AG04449 (cell line): ENCODE measurements at regions of chr7 and their contacts with region 1.

Region 1: GRCh38 chr7:26365077-26365900 is 73.6 kb downstream of the SNX10 start:
- DNase-seq: peak; percentile 14
- H3K4me3 ChIP-seq: no peak overlapping the region
- CTCF ChIP-seq: peak; percentile 49

Region 2: DNA sequence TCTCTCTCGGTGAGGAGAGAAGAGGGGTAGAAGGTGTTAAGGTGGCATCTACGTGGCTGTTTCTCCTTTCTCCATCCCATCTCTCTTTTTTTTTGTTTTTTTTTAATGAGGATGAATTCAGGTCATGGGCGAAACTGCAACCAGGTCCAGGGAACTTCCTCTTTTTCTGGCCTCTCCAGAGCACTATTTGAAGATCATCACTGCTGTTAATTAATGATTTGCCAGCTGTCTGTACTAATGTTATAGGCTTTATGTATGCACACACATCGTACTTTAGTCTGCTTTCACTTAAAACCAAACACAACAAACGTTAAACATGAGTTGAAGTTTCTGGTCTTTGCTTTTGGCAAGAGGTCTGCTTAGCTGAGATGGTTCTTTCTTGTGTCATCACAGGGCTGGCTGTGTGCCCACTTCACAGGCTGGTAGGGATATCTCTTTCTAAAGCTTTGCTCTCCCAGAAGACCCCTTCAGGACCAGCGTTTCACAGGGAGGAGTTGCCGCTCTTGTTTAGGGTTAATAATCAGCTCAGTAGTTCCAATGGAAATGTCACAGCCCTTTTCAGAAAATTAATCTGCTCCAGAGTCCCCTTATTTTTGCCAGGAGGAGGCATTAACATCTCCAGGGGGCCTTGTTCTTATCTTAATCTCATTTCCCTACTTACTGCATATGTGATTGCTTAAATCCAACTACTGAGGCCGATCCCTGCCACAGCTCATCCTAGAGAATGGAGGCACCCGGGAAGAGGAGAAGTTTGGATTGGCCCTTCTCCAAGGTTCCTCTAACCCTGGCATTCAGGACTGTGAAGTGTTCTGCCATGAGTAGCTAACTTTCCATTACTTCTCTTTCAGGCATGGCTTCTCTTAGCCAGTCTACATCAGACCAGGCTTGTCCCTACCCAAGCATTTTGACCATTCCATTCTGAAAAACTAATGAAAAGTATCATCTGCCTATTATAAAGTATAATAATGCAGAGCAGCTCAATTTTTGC is 487.2 kb before region 1 on chr7:
- CTCF ChIA-PET with region 1: interaction called, 10 read pairs
- POLR2A ChIA-PET with region 1: no interaction called
- DNase-seq: no peak
- H3K4me3 ChIP-seq: no peak overlapping the region
- CTCF ChIP-seq: no peak

Region 3: GRCh38 chr7:25996006-25996408 is 369.3 kb before region 1 on chr7:
- CTCF ChIA-PET with region 1: no interaction called
- POLR2A ChIA-PET with region 1: no interaction called
- DNase-seq: no peak
- H3K4me3 ChIP-seq: no peak overlapping the region
- CTCF ChIP-seq: no peak

Region 4: GRCh38 chr7:26090927-26091519 is 274.3 kb before region 1 on chr7:
- CTCF ChIA-PET with region 1: interaction called, 151 read pairs
- POLR2A ChIA-PET with region 1: no interaction called
- DNase-seq: peak; percentile 26
- H3K4me3 ChIP-seq: no peak overlapping the region
- CTCF ChIP-seq: peak; percentile 57

Region 5: GRCh38 chr7:26388256-26388655 is 23.0 kb after region 1 on chr7:
- CTCF ChIA-PET with region 1: interaction called, 10 read pairs
- POLR2A ChIA-PET with region 1: no interaction called
- DNase-seq: no peak
- H3K4me3 ChIP-seq: no peak overlapping the region
- CTCF ChIP-seq: no peak

Region 6: DNA sequence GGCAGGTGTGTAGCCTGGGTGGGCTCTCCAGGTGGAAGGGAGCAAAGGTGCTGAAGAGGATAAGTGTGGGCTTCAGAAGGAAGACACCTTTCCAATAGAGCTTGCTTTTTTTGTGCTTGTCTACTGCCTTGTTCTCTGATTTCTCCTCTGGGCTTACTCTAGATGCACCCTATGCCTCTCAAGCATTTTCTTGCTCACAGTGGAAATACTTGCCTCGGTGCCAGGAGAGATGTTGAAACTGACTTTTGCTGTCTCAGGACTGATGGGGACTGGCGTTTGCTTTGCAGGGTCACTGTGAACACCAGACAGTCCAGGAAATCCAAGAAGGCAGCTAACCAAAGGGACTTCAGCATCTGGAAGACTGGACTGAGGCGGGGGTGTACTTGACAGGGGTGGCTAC is 114.3 kb after region 1 on chr7:
- CTCF ChIA-PET with region 1: no interaction called
- POLR2A ChIA-PET with region 1: no interaction called
- DNase-seq: no peak
- H3K4me3 ChIP-seq: no peak overlapping the region
- CTCF ChIP-seq: no peak

Region 7: DNA sequence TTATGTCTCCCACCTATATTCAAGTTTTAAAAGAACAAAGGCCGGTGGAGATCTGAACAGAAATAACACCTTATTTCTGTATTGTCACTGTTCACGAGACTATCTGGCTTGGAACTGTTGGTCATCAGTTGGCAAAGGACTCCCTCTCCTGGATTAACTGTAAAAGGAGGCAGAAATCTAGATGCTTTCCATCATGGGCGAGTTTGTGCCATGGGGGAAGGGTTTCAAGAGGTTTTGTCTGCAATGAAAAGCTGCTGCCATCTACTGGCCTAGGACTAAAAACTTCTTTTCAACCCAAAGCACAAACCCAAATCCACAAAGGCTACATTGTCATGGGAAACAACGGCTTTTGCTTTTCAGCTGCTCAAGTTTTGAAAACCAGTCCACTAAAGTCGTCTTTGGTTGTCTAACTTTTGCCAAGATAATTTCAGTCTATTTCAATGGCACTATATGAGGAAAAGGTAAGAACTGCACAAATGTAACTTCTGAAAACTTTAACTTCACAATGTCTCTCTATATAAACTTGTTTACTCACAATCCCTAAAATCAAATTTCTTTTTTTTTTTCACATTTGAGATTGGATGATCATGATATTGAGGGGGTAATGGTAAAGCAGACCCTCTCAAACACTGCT is 302.3 kb after region 1 on chr7:
- CTCF ChIA-PET with region 1: interaction called, 179 read pairs
- POLR2A ChIA-PET with region 1: no interaction called
- DNase-seq: peak; percentile 59
- H3K4me3 ChIP-seq: no peak overlapping the region
- CTCF ChIP-seq: peak; percentile 78

Region 8: GRCh38 chr7:27160546-27161213 is 795.4 kb after region 1 on chr7:
- CTCF ChIA-PET with region 1: interaction called, 62 read pairs
- POLR2A ChIA-PET with region 1: interaction called, 3 read pairs
- DNase-seq: no peak
- H3K4me3 ChIP-seq: peak overlapping the region; percentile 75
- CTCF ChIP-seq: peak; percentile 100